Activated T-helper 1 cell treated with anti-CD3 and anti-CD28 coated beads, Interleukin-12 subunit alpha, Interleukin-12 subunit beta, Interleukin-2, Interleukin-4 antibody, amounts not matched to agents 30 ng/mL and 10 ng/mL and 1 ng/mL, durations not matched to agents 14 hours and 24 hours and 36 hours (primary cell): ENCODE measurements at regions of chrX and their contacts with region 1.

Region 1: DNA sequence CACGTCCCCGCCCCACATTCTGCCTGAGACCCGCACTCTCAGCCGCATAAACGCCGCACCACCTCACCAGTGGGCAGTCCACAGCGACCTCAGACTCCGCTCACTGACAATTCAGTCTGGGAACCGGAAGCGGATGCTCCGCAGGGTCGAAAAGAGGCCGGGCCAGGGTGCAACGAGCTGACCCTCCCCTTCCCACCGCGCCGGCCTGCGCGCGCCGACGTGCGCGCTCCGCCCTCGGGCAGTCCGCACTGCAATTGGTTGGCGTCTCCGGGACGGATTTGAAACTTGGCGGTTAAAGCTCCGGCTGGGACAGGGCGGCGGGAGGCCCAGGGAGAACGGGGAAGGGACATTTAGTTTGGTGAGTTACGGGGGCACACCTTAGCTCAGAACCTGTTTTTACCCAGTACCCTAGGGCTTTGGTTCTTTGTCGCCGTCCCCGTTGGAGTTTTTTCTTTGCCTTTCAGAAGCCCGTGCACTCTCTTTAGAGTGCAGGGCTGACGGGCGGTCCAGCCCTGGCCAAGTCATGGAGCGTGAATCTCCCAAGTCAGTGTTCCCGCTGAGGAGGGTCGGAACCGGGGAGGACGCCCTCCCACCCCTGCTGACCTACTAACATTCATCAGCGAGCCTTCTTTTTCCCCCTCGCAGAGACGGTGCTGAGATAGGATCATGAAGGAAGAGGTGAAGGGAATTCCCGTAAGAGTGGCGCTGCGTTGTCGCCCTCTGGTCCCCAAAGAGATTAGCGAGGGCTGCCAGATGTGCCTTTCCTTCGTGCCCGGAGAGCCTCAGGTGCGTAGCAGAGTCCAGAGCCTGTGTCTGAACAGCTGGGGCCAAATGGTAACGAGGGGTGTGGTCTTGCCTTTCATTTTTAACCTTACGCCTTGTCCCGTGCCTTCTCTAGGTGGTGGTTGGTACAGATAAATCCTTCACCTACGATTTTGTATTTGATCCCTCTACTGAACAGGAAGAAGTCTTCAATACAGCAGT is at the starts of genes KIF4A and PDZD11:
- DNase-seq: peak; percentile 81
- H3K4me3 Mint-ChIP-seq: peak within 1 kb of the TSS; percentile 92
- H3K27ac Mint-ChIP-seq: peak within 1 kb of the TSS; percentile 72
- H3K4me1 Mint-ChIP-seq: peaks cover 19% of the 10 kb centered on the region
- H3K27me3 Mint-ChIP-seq: no peaks in the 10 kb centered on the region
- total RNA-seq, gene KIF4A: 18.7 and 19.4 TPM in 2 replicates
- total RNA-seq, gene PDZD11: 28.7 and 31.9 TPM in 2 replicates

Region 2: GRCh38 chrX:70244881-70245280 is 45.2 kb before region 1 on chrX:
- intact Hi-C with region 1: no loop called
- DNase-seq: no peak
- H3K4me3 Mint-ChIP-seq: no peak overlapping the region
- H3K27ac Mint-ChIP-seq: no peak overlapping the region
- H3K4me1 Mint-ChIP-seq: no peaks in the 10 kb centered on the region
- H3K27me3 Mint-ChIP-seq: no peaks in the 10 kb centered on the region

Region 3: GRCh38 chrX:70433848-70434351 is 143.8 kb after region 1 on chrX:
- intact Hi-C with region 1: loop called (anchors 1 kb)
- DNase-seq: peak; percentile 64
- H3K4me3 Mint-ChIP-seq: peak overlapping the region; percentile 91
- H3K27ac Mint-ChIP-seq: peak overlapping the region; percentile 93
- H3K4me1 Mint-ChIP-seq: peaks cover 22% of the 10 kb centered on the region
- H3K27me3 Mint-ChIP-seq: peaks cover 11% of the 10 kb centered on the region

Region 4: DNA sequence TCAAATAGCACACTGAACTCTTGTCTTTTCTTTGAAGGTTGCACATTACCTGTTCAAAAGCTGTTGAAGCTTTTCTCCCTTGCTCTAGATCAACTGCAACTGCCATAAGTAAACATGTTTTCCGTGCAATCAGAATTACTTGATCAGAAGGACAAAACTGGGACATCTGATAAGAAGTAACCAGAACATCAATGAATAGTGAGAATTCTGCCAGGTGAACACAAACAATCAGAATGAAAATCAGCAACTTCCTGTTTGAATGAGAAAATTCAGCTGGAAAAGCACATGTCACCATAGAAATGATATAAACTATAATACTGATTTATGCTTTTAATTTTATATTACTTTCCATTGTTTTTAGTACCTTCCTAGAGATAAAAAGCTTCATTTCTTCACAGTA is 315.3 kb after region 1 on chrX:
- intact Hi-C with region 1: no loop called
- DNase-seq: no peak
- H3K4me3 Mint-ChIP-seq: no peak overlapping the region
- H3K27ac Mint-ChIP-seq: no peak overlapping the region
- H3K4me1 Mint-ChIP-seq: peaks cover 1% of the 10 kb centered on the region
- H3K27me3 Mint-ChIP-seq: peaks cover 4% of the 10 kb centered on the region

Region 5: DNA sequence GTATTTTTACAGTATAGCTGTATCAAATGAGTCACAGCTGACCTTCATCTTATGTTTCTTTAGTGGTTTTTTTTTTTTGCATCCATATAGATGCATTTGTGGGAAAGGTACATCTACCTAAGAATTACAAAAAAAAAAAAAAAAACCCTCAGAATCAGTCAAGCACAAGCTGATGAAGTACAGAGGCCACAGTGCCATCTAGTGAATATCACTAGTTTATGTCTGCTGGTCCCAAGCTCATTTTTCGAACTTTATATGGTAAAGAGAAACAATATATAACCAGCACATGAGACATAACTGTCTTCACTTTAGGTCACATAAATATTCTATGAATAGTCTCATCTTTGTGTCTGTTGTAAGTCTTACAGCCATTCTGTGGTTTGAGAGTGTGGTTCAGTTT is 374.6 kb after region 1 on chrX:
- intact Hi-C with region 1: loop called (anchors 2 kb)
- DNase-seq: no peak
- H3K4me3 Mint-ChIP-seq: no peak overlapping the region
- H3K27ac Mint-ChIP-seq: no peak overlapping the region
- H3K4me1 Mint-ChIP-seq: no peaks in the 10 kb centered on the region
- H3K27me3 Mint-ChIP-seq: peaks cover 4% of the 10 kb centered on the region